ENCODE measurements at regions of chr4 and their contacts with region 1.

Region 1: GRCh38 chr4:26410385-26411293 is 79.6 kb downstream of the CCKAR start:
- DNase-seq: peak; percentile 32
- ATAC-seq: peak; percentile 75
- H3K4me3 Mint-ChIP-seq: no peak overlapping the region
- H3K27ac Mint-ChIP-seq: no peak overlapping the region
- H3K4me1 Mint-ChIP-seq: peaks cover 3% of the 10 kb centered on the region
- H3K27me3 Mint-ChIP-seq: no peaks in the 10 kb centered on the region

Region 2: DNA sequence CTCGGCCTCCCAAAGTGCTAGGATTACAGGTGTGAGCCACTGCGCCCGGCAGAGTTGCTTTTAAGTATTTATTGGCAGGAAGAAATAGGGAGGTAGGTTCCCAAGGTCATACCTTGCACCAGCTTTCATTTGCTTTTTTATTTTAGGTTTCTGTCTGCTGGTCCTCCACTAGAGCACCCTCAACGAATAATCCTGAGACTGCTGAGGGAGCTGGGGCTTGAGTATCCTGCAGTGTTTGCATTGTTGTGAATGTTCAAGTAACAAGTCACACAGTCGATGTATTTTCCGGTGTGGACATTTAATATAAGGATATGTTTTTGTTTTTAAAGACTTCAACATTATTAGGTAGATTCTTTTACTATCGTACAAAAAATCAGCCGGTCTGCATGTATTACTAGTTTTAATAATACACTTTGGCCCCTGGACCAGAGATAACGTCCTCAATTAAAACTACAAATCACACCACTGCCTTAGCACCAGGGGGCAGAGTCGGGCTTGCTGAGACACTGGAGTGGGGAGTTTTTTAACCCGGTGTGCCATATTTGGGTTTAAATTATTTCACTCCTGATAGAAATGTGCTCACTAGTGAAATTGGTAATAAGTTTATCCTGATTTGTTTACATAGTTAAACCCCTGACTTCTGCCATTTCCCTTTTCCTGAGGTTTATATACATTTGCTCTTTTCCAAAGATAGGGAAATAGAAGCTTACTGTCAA is 485.0 kb before region 1 on chr4:
- CTCF ChIA-PET with region 1: no interaction called
- POLR2A ChIA-PET with region 1: no interaction called
- intact Hi-C with region 1: loop called in 1 of 2 experiments (anchors 5 kb)
- DNase-seq: peak; percentile 65
- ATAC-seq: peak; percentile 57
- H3K4me3 Mint-ChIP-seq: no peak overlapping the region
- H3K27ac Mint-ChIP-seq: no peak overlapping the region
- H3K4me1 Mint-ChIP-seq: no peaks in the 10 kb centered on the region
- H3K27me3 Mint-ChIP-seq: no peaks in the 10 kb centered on the region

Region 3: GRCh38 chr4:25993395-25994185 is 417.0 kb before region 1 on chr4:
- CTCF ChIA-PET with region 1: interaction called, 32 read pairs
- POLR2A ChIA-PET with region 1: no interaction called
- intact Hi-C with region 1: loop called (anchors 1 kb)
- DNase-seq: peak; percentile 59
- ATAC-seq: peak; percentile 79
- H3K4me3 Mint-ChIP-seq: no peak overlapping the region
- H3K27ac Mint-ChIP-seq: no peak overlapping the region
- H3K4me1 Mint-ChIP-seq: peaks cover 10% of the 10 kb centered on the region
- H3K27me3 Mint-ChIP-seq: peaks cover 2% of the 10 kb centered on the region

Region 4: GRCh38 chr4:26061248-26061986 is 349.2 kb before region 1 on chr4:
- CTCF ChIA-PET with region 1: interaction called, 3 read pairs
- POLR2A ChIA-PET with region 1: no interaction called
- intact Hi-C with region 1: loop called (anchors 1 to 5 kb)
- DNase-seq: peak; percentile 53
- ATAC-seq: peak; percentile 52
- H3K4me3 Mint-ChIP-seq: no peak overlapping the region
- H3K27ac Mint-ChIP-seq: no peak overlapping the region
- H3K4me1 Mint-ChIP-seq: peaks cover 19% of the 10 kb centered on the region
- H3K27me3 Mint-ChIP-seq: peaks cover 13% of the 10 kb centered on the region

Region 5: DNA sequence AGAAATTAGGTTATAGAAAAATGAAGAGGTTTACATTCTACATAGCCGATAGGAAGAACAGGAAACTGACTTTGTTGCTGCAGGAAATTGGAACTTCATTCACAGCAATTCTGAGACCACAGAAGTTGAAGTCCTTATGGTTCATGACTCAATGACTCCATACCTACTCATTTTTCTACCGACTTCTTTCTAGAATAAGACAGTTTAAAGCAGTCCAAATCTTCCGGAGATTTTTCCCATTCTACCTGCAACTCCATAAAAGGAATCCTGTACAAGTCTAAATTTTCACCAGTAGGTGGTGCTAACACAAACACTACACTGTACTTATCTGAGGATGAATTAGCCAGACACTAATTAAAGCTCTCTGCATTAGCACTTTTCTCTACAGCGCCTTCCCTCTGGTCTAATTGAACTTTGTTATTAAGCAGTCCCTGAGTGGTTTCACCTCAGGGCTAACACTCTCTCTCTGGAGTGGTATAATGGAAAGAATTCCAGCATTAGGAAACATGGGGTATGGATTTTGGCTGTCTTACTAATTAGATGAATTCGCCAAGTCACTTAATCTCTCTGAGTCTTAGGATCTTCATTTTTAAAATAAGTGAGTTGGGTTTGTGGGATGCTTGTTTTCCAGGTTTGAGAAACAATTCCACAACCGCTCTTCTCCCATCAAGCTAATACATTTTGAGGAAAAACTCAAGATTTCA is 328.7 kb before region 1 on chr4:
- CTCF ChIA-PET with region 1: interaction called, 3 read pairs
- POLR2A ChIA-PET with region 1: no interaction called
- intact Hi-C with region 1: loop called in 1 of 2 experiments (anchors 1 kb)
- DNase-seq: no peak
- ATAC-seq: peak; percentile 61
- H3K4me3 Mint-ChIP-seq: no peak overlapping the region
- H3K27ac Mint-ChIP-seq: peak overlapping the region; percentile 74
- H3K4me1 Mint-ChIP-seq: peaks cover 71% of the 10 kb centered on the region
- H3K27me3 Mint-ChIP-seq: peaks cover 19% of the 10 kb centered on the region

Region 6: GRCh38 chr4:26161030-26161824 is 249.4 kb before region 1 on chr4:
- CTCF ChIA-PET with region 1: no interaction called
- POLR2A ChIA-PET with region 1: no interaction called
- intact Hi-C with region 1: no loop called
- DNase-seq: peak; percentile 46
- ATAC-seq: peak; percentile 86
- H3K4me3 Mint-ChIP-seq: no peak overlapping the region
- H3K27ac Mint-ChIP-seq: no peak overlapping the region
- H3K4me1 Mint-ChIP-seq: peaks cover 12% of the 10 kb centered on the region
- H3K27me3 Mint-ChIP-seq: no peaks in the 10 kb centered on the region

Region 7: DNA sequence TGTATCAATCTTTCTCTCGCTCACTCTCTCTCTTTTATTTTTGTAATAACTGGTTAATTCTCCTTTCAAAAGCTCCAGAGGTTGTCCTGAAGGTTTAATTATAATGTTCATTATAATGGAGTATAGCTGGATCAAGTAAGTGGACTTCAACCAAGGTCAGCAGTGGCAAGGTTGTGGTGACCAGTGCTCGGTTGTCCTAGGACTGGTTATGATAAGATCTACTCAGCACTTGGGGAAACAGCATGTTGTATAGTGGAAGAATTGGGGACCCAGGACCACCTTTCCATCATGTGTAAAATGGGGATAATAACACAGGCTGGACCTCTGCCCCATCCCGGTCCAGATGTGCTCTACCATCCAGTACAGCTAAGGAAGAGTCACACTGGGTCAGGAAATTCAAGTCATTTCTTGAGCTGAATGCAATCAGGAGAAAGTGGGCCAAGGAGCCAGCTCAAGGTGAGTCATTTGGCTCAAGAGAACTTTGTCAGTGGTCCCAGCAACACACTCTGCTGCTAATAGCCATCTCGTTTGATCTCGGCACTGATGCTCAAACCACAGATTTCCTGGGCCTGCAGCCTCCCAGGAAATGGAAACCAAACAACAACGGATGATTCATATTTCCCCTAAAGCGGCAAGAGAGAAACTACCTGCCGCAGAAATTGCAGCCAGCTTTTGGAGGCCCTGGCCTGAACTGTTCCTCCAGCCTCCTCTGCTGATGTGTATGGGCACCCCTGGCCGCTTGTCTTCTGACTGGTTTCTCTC is 213.4 kb before region 1 on chr4:
- CTCF ChIA-PET with region 1: no interaction called
- POLR2A ChIA-PET with region 1: no interaction called
- intact Hi-C with region 1: no loop called
- DNase-seq: peak; percentile 80
- ATAC-seq: peak; percentile 75
- H3K4me3 Mint-ChIP-seq: peak overlapping the region; percentile 52
- H3K27ac Mint-ChIP-seq: peak overlapping the region; percentile 91
- H3K4me1 Mint-ChIP-seq: peaks cover 68% of the 10 kb centered on the region
- H3K27me3 Mint-ChIP-seq: peaks cover 2% of the 10 kb centered on the region

Region 8: GRCh38 chr4:26420913-26421312 is 10.3 kb after region 1 on chr4:
- CTCF ChIA-PET with region 1: interaction called, 14 read pairs
- POLR2A ChIA-PET with region 1: no interaction called
- intact Hi-C with region 1: no loop called
- DNase-seq: no peak
- ATAC-seq: no peak
- H3K4me3 Mint-ChIP-seq: no peak overlapping the region
- H3K27ac Mint-ChIP-seq: no peak overlapping the region
- H3K4me1 Mint-ChIP-seq: peaks cover 1% of the 10 kb centered on the region
- H3K27me3 Mint-ChIP-seq: no peaks in the 10 kb centered on the region

Measured in activated CD4-positive, alpha-beta T cell treated with anti-CD3 and anti-CD28 coated beads for 36 hours (primary cell).